PC-9 (cell line): ENCODE measurements at regions of chr20 and their contacts with region 1.

Region 1: GRCh38 chr20:40962730-40963504 is 65.7 kb upstream of the TOP1 start:
- DNase-seq: peak; percentile 54 to 76
- H3K4me3 ChIP-seq: no peak overlapping the region
- H3K27ac ChIP-seq: no peak overlapping the region
- H3K4me1 ChIP-seq: no peaks in the 10 kb centered on the region
- H3K27me3 ChIP-seq: peaks cover 7% of the 10 kb centered on the region; the same call in 1 of the 2 replicates
- CTCF ChIP-seq: peak; percentile 98

Region 2: DNA sequence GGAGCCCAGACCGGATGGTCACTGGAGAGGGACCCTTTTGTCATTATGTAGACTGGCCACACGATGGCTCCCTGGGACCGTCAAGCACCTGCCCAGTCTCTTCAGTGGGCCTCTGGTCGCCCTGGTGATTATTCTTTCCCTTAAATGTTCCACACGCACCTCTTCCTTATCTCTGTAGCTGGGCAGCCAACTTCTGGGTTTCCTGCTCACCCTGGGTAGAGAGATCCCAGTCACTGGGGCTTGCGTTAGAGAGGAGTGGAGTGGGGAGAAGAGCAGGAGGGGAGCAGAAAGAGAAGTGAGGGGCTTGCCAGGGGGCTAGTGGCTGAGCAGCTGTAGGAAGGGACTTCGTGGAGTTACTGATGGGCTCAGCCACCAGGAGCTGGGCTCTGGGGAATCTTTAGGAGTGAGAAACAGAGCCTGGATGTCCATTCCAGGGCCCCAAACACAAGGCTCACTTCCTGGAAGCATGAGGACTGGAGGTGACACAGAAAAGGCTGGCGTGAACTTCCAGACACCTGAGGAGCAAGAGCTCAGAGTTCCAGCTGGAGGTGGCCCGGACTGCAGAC is 1850.7 kb before region 1 on chr20:
- CTCF ChIA-PET with region 1: interaction called, 6 read pairs
- POLR2A ChIA-PET with region 1: no interaction called
- intact Hi-C with region 1: loop called (anchors 2 kb)
- DNase-seq: peak in 1 of 2 experiments; percentile 43
- H3K4me3 ChIP-seq: no peak overlapping the region
- H3K27ac ChIP-seq: no peak overlapping the region
- H3K4me1 ChIP-seq: peaks cover 15% of the 10 kb centered on the region
- H3K27me3 ChIP-seq: peaks cover 18% of the 10 kb centered on the region
- CTCF ChIP-seq: peak; percentile 82

Region 3: GRCh38 chr20:39885975-39886649 is 1076.8 kb before region 1 on chr20:
- CTCF ChIA-PET with region 1: no interaction called
- POLR2A ChIA-PET with region 1: no interaction called
- intact Hi-C with region 1: loop called (anchors 5 kb)
- DNase-seq: peak; percentile 16 to 64
- H3K4me3 ChIP-seq: no peak overlapping the region
- H3K27ac ChIP-seq: no peak overlapping the region
- H3K4me1 ChIP-seq: no peaks in the 10 kb centered on the region
- H3K27me3 ChIP-seq: no peaks in the 10 kb centered on the region
- CTCF ChIP-seq: peak; percentile 58

Region 4: GRCh38 chr20:40797425-40797824 is 165.5 kb before region 1 on chr20:
- CTCF ChIA-PET with region 1: no interaction called
- POLR2A ChIA-PET with region 1: no interaction called
- intact Hi-C with region 1: loop called (anchors 5 kb)
- DNase-seq: no peak
- H3K4me3 ChIP-seq: no peak overlapping the region
- H3K27ac ChIP-seq: no peak overlapping the region
- H3K4me1 ChIP-seq: no peaks in the 10 kb centered on the region
- H3K27me3 ChIP-seq: peaks cover 40% of the 10 kb centered on the region
- CTCF ChIP-seq: peak; percentile 65

Region 5: GRCh38 chr20:41078329-41078728 is 115.4 kb after region 1 on chr20:
- CTCF ChIA-PET with region 1: no interaction called
- POLR2A ChIA-PET with region 1: no interaction called
- intact Hi-C with region 1: loop called (anchors 1 kb)
- DNase-seq: peak; percentile 45 to 88
- H3K4me3 ChIP-seq: no peak overlapping the region
- H3K27ac ChIP-seq: peak overlapping the region; percentile 25; the same call in 1 of the 2 replicates
- H3K4me1 ChIP-seq: peaks cover 11% of the 10 kb centered on the region
- H3K27me3 ChIP-seq: no peaks in the 10 kb centered on the region
- CTCF ChIP-seq: peak; percentile 79

Region 6: GRCh38 chr20:41136680-41137613 is 174.0 kb after region 1 on chr20 and contains the start of gene PLCG1:
- CTCF ChIA-PET with region 1: interaction called, 5 read pairs
- POLR2A ChIA-PET with region 1: no interaction called
- intact Hi-C with region 1: loop called (anchors 1 kb)
- DNase-seq: peak; percentile 62 to 92
- H3K4me3 ChIP-seq: peak within 1 kb of the TSS; percentile 94
- H3K27ac ChIP-seq: no peak within 1 kb of the TSS
- H3K4me1 ChIP-seq: peaks cover 15% of the 10 kb centered on the region
- H3K27me3 ChIP-seq: no peaks in the 10 kb centered on the region
- CTCF ChIP-seq: no peak
- total RNA-seq, gene PLCG1: 64.1 and 69.4 TPM in 2 replicates

Region 7: GRCh38 chr20:41232973-41233926 is 270.3 kb after region 1 on chr20:
- CTCF ChIA-PET with region 1: no interaction called
- POLR2A ChIA-PET with region 1: no interaction called
- intact Hi-C with region 1: loop called (anchors 1 kb)
- DNase-seq: peak in 1 of 2 experiments; percentile 45
- H3K4me3 ChIP-seq: peak overlapping the region; percentile 45; the same call in 1 of the 2 replicates
- H3K27ac ChIP-seq: no peak overlapping the region
- H3K4me1 ChIP-seq: peaks cover 11% of the 10 kb centered on the region
- H3K27me3 ChIP-seq: no peaks in the 10 kb centered on the region
- CTCF ChIP-seq: no peak